Activated T-helper 1 cell treated with anti-CD3 and anti-CD28 coated beads, Interleukin-12 subunit alpha, Interleukin-12 subunit beta, Interleukin-2, Interleukin-4 antibody, amounts not matched to agents 30 ng/mL and 10 ng/mL and 1 ng/mL, durations not matched to agents 14 hours and 24 hours and 36 hours (primary cell): ENCODE measurements at regions of chr12 and their contacts with region 1.

Region 1: DNA sequence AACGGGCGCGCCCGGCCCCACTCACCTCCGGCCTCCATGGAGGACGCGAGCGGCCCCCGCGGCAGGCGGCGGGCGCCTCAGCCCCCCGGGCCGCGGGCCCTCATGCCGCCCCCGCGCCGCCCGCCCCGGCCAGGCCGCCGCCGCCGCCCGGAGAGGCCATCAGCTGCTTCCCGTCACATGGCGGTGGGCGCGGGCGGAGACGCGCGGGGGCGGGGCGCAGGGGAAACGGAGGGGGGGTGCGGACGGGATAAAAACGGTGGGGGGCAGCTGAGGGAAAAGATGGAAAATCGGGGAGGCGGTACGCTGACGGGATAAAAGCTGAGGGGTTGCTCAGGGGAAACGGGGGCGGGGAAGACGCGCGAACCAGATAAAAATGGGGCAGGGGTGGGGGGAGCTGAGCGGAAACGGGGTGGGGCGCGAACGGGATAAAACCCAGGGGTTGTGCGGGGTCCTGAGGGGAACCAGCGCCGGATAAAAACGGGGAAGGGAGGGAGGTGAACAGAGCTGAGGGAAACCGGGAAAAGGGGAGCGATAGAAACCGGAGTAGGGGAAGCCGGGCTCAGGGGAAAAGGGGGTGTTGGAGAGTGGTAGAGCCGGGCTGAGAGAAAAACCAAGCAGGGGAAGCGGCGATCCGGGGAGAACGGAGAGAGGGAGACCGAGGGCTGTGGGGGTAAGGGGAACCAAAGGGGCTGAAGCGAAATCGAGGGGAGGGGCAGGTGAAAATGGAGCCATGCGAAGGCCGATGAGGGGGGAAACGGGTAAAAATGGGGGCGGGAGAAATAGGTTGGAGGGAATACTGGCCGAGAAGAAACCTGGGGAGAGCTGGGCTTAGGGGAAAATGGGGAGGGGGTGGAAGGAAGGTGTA is at the start of gene WSB2:
- DNase-seq: peak; percentile 48
- H3K4me3 Mint-ChIP-seq: peak within 1 kb of the TSS; percentile 92
- H3K27ac Mint-ChIP-seq: peak within 1 kb of the TSS; percentile 94
- H3K4me1 Mint-ChIP-seq: peaks cover 55% of the 10 kb centered on the region
- H3K27me3 Mint-ChIP-seq: no peaks in the 10 kb centered on the region
- total RNA-seq, gene WSB2: 122 and 127 TPM in 2 replicates

Region 2: DNA sequence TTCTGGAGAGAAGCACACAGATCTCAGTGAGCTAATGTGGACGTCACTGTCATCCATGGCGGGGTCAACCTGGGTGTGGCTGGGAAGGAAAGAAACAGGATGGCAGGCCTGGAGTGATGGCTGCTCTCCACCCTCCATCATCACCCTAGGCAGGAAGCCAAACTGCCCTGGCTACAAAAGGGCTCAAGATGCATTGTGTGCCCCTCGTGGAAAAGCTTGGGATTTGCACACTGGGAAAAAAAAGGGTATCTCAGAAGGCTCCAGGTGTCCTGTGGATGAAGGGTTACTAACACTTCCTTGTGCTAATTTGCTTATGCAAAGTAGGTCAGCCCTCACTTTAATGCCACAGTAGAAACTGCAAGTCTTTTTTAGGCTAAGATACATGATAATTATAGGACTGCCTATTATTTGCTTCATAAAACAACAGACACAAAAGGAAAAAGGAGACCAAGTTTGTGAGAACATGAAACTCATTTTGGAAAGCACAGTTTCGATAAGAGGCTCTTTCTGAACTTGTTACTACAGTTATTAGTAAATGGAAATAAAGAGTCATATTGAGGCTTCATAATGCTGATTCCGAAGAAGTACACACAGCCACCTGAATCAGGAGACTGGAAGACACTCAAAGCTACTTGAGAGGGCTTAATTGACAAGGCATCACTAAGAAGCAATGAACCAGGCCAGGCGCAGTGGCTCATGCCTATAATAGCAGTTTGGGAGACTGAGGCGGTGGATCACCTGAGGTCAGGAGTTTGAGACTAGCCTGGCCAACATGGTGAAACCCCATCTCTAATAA is 25.8 kb before region 1 on chr12:
- intact Hi-C with region 1: loop called (anchors 1 kb)
- DNase-seq: no peak
- H3K4me3 Mint-ChIP-seq: peak overlapping the region; percentile 57
- H3K27ac Mint-ChIP-seq: peak overlapping the region; percentile 99
- H3K4me1 Mint-ChIP-seq: peaks cover 46% of the 10 kb centered on the region
- H3K27me3 Mint-ChIP-seq: no peaks in the 10 kb centered on the region

Region 3: DNA sequence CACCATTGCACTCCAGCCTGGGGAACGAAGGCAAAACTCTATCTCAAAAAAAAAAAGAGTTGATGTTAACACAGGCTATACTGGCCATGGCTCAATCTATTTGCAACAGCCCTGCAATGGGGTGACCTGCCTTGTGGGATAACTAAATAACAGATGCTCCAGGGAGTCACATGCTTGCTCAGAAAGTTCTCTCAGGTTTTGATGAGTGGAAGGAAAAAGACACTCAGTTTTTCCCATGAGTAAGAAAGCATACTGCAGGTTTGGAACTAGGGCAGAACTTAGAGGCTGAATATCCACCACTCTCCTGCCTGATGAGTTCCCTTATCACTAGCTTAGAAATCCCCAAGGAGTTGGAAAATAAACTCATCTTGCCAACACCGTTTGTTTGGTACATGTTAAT is 17.2 kb before region 1 on chr12:
- intact Hi-C with region 1: loop called (anchors 1 kb)
- DNase-seq: no peak
- H3K4me3 Mint-ChIP-seq: peak overlapping the region; percentile 72
- H3K27ac Mint-ChIP-seq: peak overlapping the region; percentile 95
- H3K4me1 Mint-ChIP-seq: peaks cover 47% of the 10 kb centered on the region
- H3K27me3 Mint-ChIP-seq: no peaks in the 10 kb centered on the region

Region 4: GRCh38 chr12:118103604-118104382 is 42.5 kb after region 1 on chr12 and contains the start of gene VSIG10:
- intact Hi-C with region 1: loop called (anchors 2 kb)
- DNase-seq: peak; percentile 16
- H3K4me3 Mint-ChIP-seq: peak within 1 kb of the TSS; percentile 95
- H3K27ac Mint-ChIP-seq: peak within 1 kb of the TSS; percentile 44
- H3K4me1 Mint-ChIP-seq: peaks cover 10% of the 10 kb centered on the region
- H3K27me3 Mint-ChIP-seq: peaks cover 29% of the 10 kb centered on the region
- total RNA-seq, gene VSIG10: 15.1 and 16.0 TPM in 2 replicates

Region 5: DNA sequence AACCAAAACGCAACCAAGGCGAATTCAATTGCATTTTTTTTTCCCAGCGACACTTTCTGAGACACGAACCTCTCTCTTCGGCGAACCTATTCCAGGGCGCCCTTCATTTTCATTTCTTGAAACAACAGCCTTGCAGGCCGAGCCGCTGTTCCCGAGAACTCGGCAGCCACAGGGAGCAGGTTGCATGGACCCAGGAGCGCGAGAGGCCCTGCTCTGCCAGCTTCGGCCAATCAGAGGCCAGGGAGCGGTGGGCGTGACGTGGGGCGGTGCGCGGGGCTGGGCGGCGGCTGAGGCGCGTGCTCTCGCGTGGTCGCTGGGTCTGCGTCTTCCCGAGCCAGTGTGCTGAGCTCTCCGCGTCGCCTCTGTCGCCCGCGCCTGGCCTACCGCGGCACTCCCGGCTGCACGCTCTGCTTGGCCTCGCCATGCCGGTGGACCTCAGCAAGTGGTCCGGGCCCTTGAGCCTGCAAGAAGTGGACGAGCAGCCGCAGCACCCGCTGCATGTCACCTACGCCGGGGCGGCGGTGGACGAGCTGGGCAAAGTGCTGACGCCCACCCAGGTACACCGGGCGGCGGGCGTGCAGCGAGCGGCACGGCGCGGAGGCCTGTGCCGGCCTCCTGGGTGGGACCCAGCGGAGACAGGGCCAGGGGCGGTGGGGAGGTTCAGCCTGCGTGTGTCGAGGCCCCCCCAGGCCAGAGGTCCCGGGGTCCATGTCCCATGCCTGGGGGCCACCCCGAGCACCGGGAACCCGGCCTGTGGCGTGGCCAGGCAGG is 74.7 kb after region 1 on chr12 and contains the start of gene PEBP1:
- intact Hi-C with region 1: loop called (anchors 2 kb)
- DNase-seq: peak; percentile 93
- H3K4me3 Mint-ChIP-seq: peak within 1 kb of the TSS; percentile 95
- H3K27ac Mint-ChIP-seq: peak within 1 kb of the TSS; percentile 89
- H3K4me1 Mint-ChIP-seq: peaks cover 18% of the 10 kb centered on the region
- H3K27me3 Mint-ChIP-seq: no peaks in the 10 kb centered on the region
- total RNA-seq, gene PEBP1: 200 and 205 TPM in 2 replicates

Region 6: DNA sequence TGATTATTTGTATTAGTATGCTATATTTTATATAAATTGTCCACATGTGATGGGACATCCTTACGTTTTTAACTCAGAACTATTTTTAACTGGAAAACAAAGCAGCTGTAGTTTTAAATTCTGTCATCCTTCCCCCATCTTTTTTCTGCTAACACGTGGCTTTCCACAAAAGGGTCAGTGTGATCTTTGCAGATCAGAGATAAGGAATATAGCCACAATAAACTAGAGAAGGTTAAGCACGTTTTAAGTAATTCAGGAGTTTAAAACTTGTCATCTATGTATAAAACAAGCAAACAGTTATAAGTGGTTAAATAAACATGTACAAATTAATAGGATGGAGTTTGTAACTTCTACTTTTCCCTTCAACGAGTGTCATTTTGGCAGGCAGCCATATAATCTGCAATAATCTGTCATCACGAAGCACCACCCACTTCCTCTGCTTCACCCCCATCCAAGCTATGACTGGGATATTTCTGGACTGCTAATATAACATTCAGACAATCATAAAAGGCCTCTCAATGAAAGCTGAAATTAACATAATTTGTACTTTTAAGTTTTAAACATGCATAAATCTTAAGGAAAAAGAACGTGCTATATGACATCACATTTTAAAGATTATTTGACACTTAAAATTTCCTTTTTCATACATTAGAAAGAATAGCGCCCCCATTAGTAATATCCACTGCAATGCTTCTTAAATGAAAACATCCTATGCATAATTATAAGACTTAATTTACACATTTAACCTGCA is 296.2 kb after region 1 on chr12:
- intact Hi-C with region 1: loop called (anchors 5 kb)
- DNase-seq: no peak
- H3K4me3 Mint-ChIP-seq: peak overlapping the region; percentile 99
- H3K27ac Mint-ChIP-seq: peak overlapping the region; percentile 95
- H3K4me1 Mint-ChIP-seq: peaks cover 58% of the 10 kb centered on the region
- H3K27me3 Mint-ChIP-seq: no peaks in the 10 kb centered on the region